ENCODE measurements at regions of chr10 and their contacts with region 1.

Region 1: DNA sequence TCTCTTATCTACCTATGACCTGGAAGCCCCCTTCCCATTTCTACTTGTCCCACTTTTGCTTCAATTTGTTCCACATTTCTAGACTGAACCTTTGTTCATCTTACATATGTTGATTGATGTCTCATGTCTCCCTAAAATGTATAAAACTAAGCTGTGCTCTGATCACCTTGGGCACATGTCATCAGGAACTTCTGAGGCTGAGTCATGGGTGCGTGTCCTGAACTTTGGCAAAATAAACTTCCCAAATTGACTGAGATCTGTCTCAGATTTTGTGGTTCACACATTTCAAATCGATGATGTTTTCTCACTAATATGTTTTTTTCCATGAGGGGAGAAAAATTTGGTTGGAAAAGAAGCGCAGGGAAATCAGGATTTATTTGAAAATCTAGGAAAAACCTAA is 406.2 kb upstream of the LRRTM3 start:
- DNase-seq: peak; percentile 97
- ATAC-seq: peak; percentile 70
- H3K4me3 ChIP-seq: no peak overlapping the region
- H3K27ac ChIP-seq: peak overlapping the region; percentile 29
- H3K4me1 ChIP-seq: peaks cover 24% of the 10 kb centered on the region
- H3K27me3 ChIP-seq: no peaks in the 10 kb centered on the region
- CTCF ChIP-seq: no peak

Region 2: GRCh38 chr10:66307826-66308225 is 211.8 kb before region 1 on chr10:
- CTCF ChIA-PET with region 1: no interaction called
- POLR2A ChIA-PET with region 1: no interaction called
- intact Hi-C with region 1: loop called (anchors 5 kb)
- DNase-seq: peak; percentile 78
- ATAC-seq: peak; percentile 87
- H3K4me3 ChIP-seq: no peak overlapping the region
- H3K27ac ChIP-seq: no peak overlapping the region
- H3K4me1 ChIP-seq: no peaks in the 10 kb centered on the region
- H3K27me3 ChIP-seq: no peaks in the 10 kb centered on the region
- CTCF ChIP-seq: peak; percentile 91

Region 3: DNA sequence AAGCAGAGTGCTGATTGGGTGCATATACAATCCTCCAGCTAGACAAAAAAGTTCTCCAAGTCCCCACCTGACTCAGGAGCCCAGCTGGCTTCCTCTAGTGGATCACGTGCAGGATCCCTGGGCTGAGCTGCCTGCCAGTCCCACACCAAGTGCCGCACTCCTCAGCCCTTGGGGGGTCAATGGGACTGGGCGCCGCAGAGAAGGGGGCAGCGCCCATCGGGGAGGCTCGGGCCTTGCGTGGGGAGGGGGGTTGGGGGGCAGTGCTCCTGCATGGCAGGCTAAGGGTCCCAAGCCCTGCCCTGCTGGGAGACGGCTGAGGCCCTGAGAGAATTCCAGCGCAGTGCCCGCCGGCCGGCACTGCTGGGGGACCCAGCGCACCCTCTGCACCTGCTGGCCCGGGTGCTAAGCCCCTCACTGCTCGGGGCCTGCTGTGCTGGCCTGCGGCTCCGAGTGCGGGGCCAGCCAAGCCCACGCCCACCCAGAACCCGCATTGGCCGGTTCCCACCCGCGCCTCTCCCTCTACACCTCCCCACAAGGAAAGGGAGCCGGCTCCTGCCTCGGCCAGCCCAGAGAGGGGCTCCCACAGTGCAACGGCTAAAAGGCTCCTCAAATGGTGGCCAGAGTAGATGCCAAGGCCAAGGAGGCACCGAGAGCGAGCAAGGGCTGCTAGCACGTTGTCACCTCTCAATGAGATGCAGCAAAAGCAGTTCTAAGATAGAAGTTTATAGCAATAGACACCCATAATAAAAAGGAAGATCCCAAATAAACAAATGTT is 131.9 kb after region 1 on chr10:
- CTCF ChIA-PET with region 1: no interaction called
- POLR2A ChIA-PET with region 1: no interaction called
- intact Hi-C with region 1: no loop called
- DNase-seq: no peak
- ATAC-seq: no peak
- H3K4me3 ChIP-seq: no peak overlapping the region
- H3K27ac ChIP-seq: no peak overlapping the region
- H3K4me1 ChIP-seq: no peaks in the 10 kb centered on the region
- H3K27me3 ChIP-seq: no peaks in the 10 kb centered on the region
- CTCF ChIP-seq: no peak

Region 4: GRCh38 chr10:66925896-66926715 is 406.5 kb after region 1 on chr10 and contains the start of gene LRRTM3:
- CTCF ChIA-PET with region 1: no interaction called
- POLR2A ChIA-PET with region 1: no interaction called
- intact Hi-C with region 1: loop called (anchors 5 kb)
- DNase-seq: peak; percentile 99
- ATAC-seq: peak; percentile 99
- H3K4me3 ChIP-seq: peak within 1 kb of the TSS; percentile 42
- H3K27ac ChIP-seq: no peak within 1 kb of the TSS
- H3K4me1 ChIP-seq: peaks cover 18% of the 10 kb centered on the region
- H3K27me3 ChIP-seq: peaks cover 6% of the 10 kb centered on the region; the same call in 1 of the 2 replicates
- CTCF ChIP-seq: peak; percentile 99
- total RNA-seq, gene LRRTM3: 0.12 and 0.15 TPM in 2 replicates